ENCODE measurements at regions of chr10 and their contacts with region 1.

Region 1: GRCh38 chr10:14779053-14779651 is 4.5 kb upstream of the FAM107B start:
- DNase-seq: no peak
- H3K4me3 ChIP-seq: no peak overlapping the region
- H3K27ac ChIP-seq: no peak overlapping the region
- H3K4me1 ChIP-seq: peaks cover 0 to 16% (median 15%) of the 10 kb centered on the region in 4 donors
- H3K27me3 ChIP-seq: no peaks in the 10 kb centered on the region
- CTCF ChIP-seq: no peak
- EP300 ChIP-seq: no peak
- POLR2A ChIP-seq: no peak

Region 2: DNA sequence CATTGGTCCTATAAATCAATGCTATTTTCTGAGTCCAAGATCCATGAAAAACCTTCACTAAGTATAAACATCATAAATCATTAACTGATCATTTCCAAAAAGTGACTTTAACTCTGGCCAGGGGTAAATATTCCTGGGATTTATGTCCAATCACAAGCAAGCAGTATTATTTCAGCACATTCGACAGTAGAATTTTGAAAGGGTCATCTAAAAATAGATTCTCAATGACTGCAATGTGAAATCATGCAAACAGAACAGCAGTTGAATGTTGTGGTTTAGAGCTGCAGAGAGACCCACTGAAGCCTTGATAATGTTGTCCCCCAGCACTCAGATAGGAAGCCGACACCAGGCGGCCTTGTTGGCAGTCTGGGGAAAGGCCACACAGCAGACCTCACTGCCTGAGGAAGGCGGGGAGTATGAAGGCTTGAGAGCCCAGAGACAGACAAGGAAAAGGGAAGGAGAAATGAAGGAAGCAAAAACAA is 42.5 kb before region 1 on chr10:
- intact Hi-C with region 1: loop called (anchors 2 kb)
- DNase-seq: peak; percentile 76
- H3K4me3 ChIP-seq: no peak overlapping the region
- H3K27ac ChIP-seq: peak overlapping the region; percentile 48 to 68 (median 56)
- H3K4me1 ChIP-seq: peaks cover 0 to 39% (median 27%) of the 10 kb centered on the region in 4 donors
- H3K27me3 ChIP-seq: no peaks in the 10 kb centered on the region
- CTCF ChIP-seq: no peak
- EP300 ChIP-seq: no peak
- POLR2A ChIP-seq: no peak

Region 3: GRCh38 chr10:14837757-14838581 is 58.8 kb after region 1 on chr10 and contains the starts of genes CDNF, HSPA14 and MSANTD7:
- intact Hi-C with region 1: no loop called
- DNase-seq: peak; percentile 100
- H3K4me3 ChIP-seq: peak within 1 kb of the TSS; percentile 86 to 95 (median 90)
- H3K27ac ChIP-seq: peak within 1 kb of the TSS; percentile 90 to 96 (median 95)
- H3K4me1 ChIP-seq: peaks cover 0 to 27% (median 17%) of the 10 kb centered on the region in 4 donors
- H3K27me3 ChIP-seq: no peaks in the 10 kb centered on the region
- CTCF ChIP-seq: no peak
- EP300 ChIP-seq: peak in 1 of 4 donors; percentile 52
- POLR2A ChIP-seq: peak; percentile 58 to 75
- total RNA-seq, gene CDNF: 1.5 to 2.9 (median 2.2) TPM in 3 of 4 donors, not detected in the other
- total RNA-seq, gene HSPA14: 10.0 to 13.4 (median 11.6) TPM
- total RNA-seq, gene MSANTD7: 4.7 to 8.1 (median 5.8) TPM